Endothelial cell of umbilical vein (primary cell): ENCODE measurements at regions of chr5 and their contacts with region 1.

Region 1: GRCh38 chr5:79133657-79134451 is 22.2 kb downstream of the BHMT start:
- DNase-seq: peak; percentile 88
- H3K4me3 ChIP-seq: peak overlapping the region in 2 of 3 experiments; percentile 0 to 50
- H3K27ac ChIP-seq: peak overlapping the region; percentile 62
- H3K4me1 ChIP-seq: peaks cover 11% of the 10 kb centered on the region
- H3K27me3 ChIP-seq: peaks cover 2 to 3% of the 10 kb centered on the region in 2 experiments
- CTCF ChIP-seq: peak; percentile 69 to 78
- POLR2A ChIP-seq: no peak

Region 2: DNA sequence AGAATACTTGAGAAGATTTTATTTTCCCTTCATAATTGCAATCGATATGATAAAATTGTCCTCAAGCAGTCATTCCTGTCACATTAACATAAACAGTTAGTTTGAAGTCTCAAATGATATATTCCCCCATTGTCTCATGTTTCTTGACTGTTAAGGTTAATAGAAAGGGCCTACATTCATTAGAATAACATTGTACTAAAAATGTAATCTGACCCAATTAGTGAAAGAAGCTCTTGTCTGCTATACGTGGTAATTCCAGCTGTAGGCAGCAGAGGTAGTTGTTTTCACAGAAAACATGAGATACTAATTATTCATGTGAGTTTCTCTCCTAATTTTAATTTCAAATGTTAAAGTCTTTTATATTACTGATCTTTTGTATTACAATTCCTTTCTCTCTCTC is 813.5 kb before region 1 on chr5:
- CTCF ChIA-PET with region 1: interaction called, 20 read pairs
- POLR2A ChIA-PET with region 1: no interaction called
- dilution Hi-C with region 1: no loop called
- intact Hi-C with region 1: no loop called
- DNase-seq: peak; percentile 66
- H3K4me3 ChIP-seq: no peak overlapping the region
- H3K27ac ChIP-seq: no peak overlapping the region
- H3K4me1 ChIP-seq: no peaks in the 10 kb centered on the region
- H3K27me3 ChIP-seq: no peaks in the 10 kb centered on the region
- CTCF ChIP-seq: peak; percentile 27
- POLR2A ChIP-seq: no peak

Region 3: GRCh38 chr5:78659714-78660113 is 474.1 kb before region 1 on chr5:
- CTCF ChIA-PET with region 1: no interaction called
- POLR2A ChIA-PET with region 1: no interaction called
- dilution Hi-C with region 1: no loop called
- intact Hi-C with region 1: no loop called
- DNase-seq: peak; percentile 79
- H3K4me3 ChIP-seq: no peak overlapping the region
- H3K27ac ChIP-seq: no peak overlapping the region
- H3K4me1 ChIP-seq: peaks cover 6% of the 10 kb centered on the region
- H3K27me3 ChIP-seq: no peaks in the 10 kb centered on the region
- CTCF ChIP-seq: no peak
- POLR2A ChIP-seq: no peak

Region 4: GRCh38 chr5:78757269-78758053 is 376.4 kb before region 1 on chr5:
- CTCF ChIA-PET with region 1: no interaction called
- POLR2A ChIA-PET with region 1: no interaction called
- dilution Hi-C with region 1: no loop called
- intact Hi-C with region 1: no loop called
- DNase-seq: no peak
- H3K4me3 ChIP-seq: no peak overlapping the region
- H3K27ac ChIP-seq: no peak overlapping the region
- H3K4me1 ChIP-seq: no peaks in the 10 kb centered on the region
- H3K27me3 ChIP-seq: peaks cover 0 to 4% of the 10 kb centered on the region in 2 experiments
- CTCF ChIP-seq: no peak
- POLR2A ChIP-seq: no peak

Region 5: DNA sequence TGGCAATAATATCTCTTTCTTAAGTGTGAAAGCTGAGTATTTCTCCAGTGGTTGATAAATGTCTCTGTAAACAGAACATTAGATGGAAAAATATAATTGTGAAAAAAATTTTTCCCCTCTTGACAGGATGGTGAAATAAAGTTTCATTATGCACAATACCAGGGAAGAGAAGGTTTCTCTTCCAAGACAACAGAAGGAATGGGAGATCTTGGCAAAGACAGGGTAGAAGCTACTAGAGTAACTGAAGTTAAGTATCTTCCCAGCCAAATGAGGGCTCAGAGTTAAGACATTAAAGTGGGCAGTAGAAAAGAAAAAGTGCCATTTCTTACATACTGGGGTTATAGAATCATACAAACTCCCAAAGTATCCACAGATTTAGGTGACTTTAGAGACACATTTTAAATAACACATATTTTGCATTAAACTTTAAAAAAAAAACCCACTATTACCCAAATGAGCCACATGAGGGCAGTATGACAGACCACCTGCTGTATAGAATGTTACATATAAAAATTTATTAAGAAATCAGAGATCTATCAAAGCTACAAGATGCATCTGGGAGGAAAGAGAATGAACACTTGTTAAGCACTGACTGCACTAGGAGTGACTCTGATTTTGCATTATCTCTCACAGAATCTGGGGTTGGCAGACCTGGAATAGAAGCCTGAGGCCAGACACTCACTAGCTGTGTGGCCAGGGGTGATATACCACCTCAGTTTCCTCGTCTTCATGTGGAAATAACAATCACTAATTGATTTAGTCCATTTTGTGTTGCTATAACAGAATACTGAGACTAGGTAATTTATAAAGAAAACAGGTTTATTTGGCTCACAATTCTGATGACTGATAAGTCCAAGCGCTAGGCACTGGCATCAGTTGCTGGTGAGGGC is 247.3 kb before region 1 on chr5:
- CTCF ChIA-PET with region 1: interaction called, 23 read pairs
- POLR2A ChIA-PET with region 1: no interaction called
- dilution Hi-C with region 1: no loop called
- intact Hi-C with region 1: no loop called
- DNase-seq: peak; percentile 41
- H3K4me3 ChIP-seq: no peak overlapping the region
- H3K27ac ChIP-seq: no peak overlapping the region
- H3K4me1 ChIP-seq: no peaks in the 10 kb centered on the region
- H3K27me3 ChIP-seq: no peaks in the 10 kb centered on the region
- CTCF ChIP-seq: peak; percentile 37 to 51
- POLR2A ChIP-seq: no peak

Region 6: DNA sequence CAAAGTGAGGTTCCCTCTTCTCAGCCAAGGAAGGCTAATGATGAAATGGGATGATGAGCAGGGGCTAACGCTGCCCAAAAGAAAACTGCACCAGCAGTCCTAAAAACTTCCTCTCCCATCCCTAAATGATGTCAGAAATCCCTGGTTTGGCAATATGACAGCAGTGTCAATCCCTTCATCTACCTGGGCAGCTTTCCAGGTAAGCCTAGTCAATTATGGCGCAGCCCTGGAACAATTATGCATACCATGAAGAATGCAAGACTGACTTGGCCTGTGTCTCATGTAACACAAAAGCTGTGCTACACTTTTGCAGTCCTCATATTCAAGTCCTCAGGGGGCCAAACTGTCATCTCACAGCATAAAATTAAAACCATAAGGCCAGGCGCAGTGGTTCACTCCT is 71.4 kb before region 1 on chr5:
- CTCF ChIA-PET with region 1: interaction called, 10 read pairs
- POLR2A ChIA-PET with region 1: no interaction called
- dilution Hi-C with region 1: no loop called
- intact Hi-C with region 1: no loop called
- DNase-seq: no peak
- H3K4me3 ChIP-seq: no peak overlapping the region
- H3K27ac ChIP-seq: no peak overlapping the region
- H3K4me1 ChIP-seq: no peaks in the 10 kb centered on the region
- H3K27me3 ChIP-seq: peaks cover 1 to 4% of the 10 kb centered on the region in 2 experiments
- CTCF ChIP-seq: no peak
- POLR2A ChIP-seq: no peak

Region 7: GRCh38 chr5:79157305-79157704 is 23.5 kb after region 1 on chr5:
- CTCF ChIA-PET with region 1: interaction called, 12 read pairs
- POLR2A ChIA-PET with region 1: no interaction called
- dilution Hi-C with region 1: no loop called
- intact Hi-C with region 1: no loop called
- DNase-seq: no peak
- H3K4me3 ChIP-seq: no peak overlapping the region
- H3K27ac ChIP-seq: no peak overlapping the region
- H3K4me1 ChIP-seq: no peaks in the 10 kb centered on the region
- H3K27me3 ChIP-seq: peaks cover 0 to 5% of the 10 kb centered on the region in 2 experiments
- CTCF ChIP-seq: no peak
- POLR2A ChIP-seq: no peak

Region 8: GRCh38 chr5:79235634-79236363 is 101.9 kb after region 1 on chr5 and contains the start of gene JMY:
- CTCF ChIA-PET with region 1: interaction called, 37 read pairs
- POLR2A ChIA-PET with region 1: no interaction called
- dilution Hi-C with region 1: no loop called
- intact Hi-C with region 1: loop called (anchors 1 kb)
- DNase-seq: peak; percentile 81
- H3K4me3 ChIP-seq: peak within 1 kb of the TSS; percentile 36 to 73 (median 64)
- H3K27ac ChIP-seq: peak within 1 kb of the TSS; percentile 54
- H3K4me1 ChIP-seq: peaks cover 10% of the 10 kb centered on the region
- H3K27me3 ChIP-seq: no peaks in the 10 kb centered on the region
- CTCF ChIP-seq: peak in 1 of 2 donors; percentile 22
- POLR2A ChIP-seq: peak; percentile 87
- total RNA-seq, gene JMY: 6.3 and 6.5 TPM in 2 replicates

Region 9: DNA sequence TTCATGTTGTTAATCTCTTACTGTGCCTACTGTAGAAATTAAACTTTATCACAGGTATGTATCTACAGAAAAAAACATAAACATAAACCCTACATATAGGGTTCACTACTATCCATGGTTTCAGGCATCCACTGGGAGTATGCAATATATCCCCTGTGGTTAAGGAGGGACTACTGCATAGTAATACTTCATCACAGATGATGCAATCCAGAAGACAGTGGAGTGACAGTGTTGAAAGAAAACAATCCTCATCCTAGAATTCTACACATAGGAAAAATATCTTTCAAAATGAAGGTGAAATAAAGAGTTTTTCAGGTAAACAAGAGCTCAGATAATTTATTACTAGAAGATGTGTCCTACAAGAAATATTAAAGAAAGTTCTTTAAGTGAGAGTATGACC is 274.2 kb after region 1 on chr5:
- CTCF ChIA-PET with region 1: no interaction called
- POLR2A ChIA-PET with region 1: no interaction called
- dilution Hi-C with region 1: no loop called
- intact Hi-C with region 1: no loop called
- DNase-seq: no peak
- H3K4me3 ChIP-seq: no peak overlapping the region
- H3K27ac ChIP-seq: no peak overlapping the region
- H3K4me1 ChIP-seq: no peaks in the 10 kb centered on the region
- H3K27me3 ChIP-seq: no peaks in the 10 kb centered on the region
- CTCF ChIP-seq: no peak
- POLR2A ChIP-seq: no peak

Region 10: GRCh38 chr5:80083101-80083890 is 949.4 kb after region 1 on chr5:
- CTCF ChIA-PET with region 1: interaction called, 11 read pairs
- POLR2A ChIA-PET with region 1: no interaction called
- dilution Hi-C with region 1: no loop called
- intact Hi-C with region 1: loop called (anchors 5 kb)
- DNase-seq: peak; percentile 64
- H3K4me3 ChIP-seq: peak overlapping the region in 1 of 3 experiments; percentile 23
- H3K27ac ChIP-seq: no peak overlapping the region
- H3K4me1 ChIP-seq: no peaks in the 10 kb centered on the region
- H3K27me3 ChIP-seq: no peaks in the 10 kb centered on the region
- CTCF ChIP-seq: peak; percentile 45 to 51
- POLR2A ChIP-seq: no peak